A549 (cell line): ENCODE measurements at regions of chr10 and their contacts with region 1.

Region 1: DNA sequence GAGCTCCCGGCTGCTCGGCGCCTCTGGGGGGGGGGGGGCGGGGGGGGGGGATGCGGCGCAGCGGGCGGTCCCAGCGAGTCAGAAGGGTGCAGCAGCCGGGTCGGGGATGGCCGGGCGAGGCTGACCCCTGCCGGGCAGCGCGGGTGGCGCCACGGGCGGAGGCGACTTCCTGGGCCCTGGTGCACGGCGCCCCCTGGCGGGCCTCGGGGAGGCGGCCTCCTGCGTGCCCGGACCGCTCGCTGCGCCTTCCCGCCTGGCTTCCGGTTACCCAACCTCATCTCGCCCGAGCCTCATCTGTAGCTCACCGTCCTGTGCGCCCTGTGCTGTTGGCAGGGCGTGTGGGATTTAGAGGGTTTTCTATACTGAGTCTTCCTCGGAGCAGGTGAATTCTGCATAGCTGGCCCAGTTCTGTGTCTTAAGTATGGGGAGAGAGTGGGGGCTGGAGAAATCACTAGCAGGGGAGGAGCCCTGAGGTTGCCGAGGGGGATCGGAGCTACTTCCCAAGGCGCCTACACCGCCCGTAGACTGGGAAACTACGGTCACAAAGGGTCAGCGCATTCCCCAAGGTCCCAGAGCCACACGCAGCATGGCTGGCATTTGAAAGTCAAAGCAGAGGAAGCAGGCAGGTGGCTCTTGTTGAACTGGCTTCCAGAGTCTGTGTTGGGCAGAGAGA is 28.3 kb upstream of the WDFY4 start:
- DNase-seq: peak; percentile 58 to 92
- ATAC-seq: peak; percentile 79 to 91
- H3K4me3 ChIP-seq: peak overlapping the region; percentile 56
- H3K27ac ChIP-seq: peak overlapping the region; percentile 74 to 88
- H3K4me1 ChIP-seq: 0 out of 3 replicates have a peak, but pooled peaks cover 3% of the 10 kb centered on the region
- CTCF ChIP-seq: peak; percentile 99
- EP300 ChIP-seq: no peak
- POLR2A ChIP-seq: no peak
- RAD21 ChIP-seq: peak; percentile 67 to 95

Region 2: DNA sequence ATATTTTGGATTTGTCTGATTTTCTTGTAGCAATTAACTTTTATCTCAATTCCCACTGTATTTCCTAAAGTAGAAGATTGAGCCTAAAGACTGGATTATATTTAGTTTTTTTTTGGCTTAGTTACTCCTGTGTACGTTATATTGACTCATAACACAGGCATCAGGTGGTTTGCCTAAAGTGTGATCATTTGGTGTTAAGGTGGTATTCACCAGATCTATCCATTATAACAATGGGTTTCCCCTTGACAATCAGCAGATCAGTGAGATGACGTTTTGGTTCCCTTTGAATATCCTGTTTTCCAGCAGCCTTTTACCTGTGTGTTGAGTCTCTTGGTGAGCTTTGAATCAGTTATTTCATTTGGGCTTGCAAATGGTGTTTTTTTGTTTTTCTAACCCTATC is 331.8 kb before region 1 on chr10:
- CTCF ChIA-PET with region 1: no interaction called
- POLR2A ChIA-PET with region 1: no interaction called
- DNase-seq: no peak
- ATAC-seq: no peak
- H3K4me3 ChIP-seq: no peak overlapping the region
- H3K27ac ChIP-seq: no peak overlapping the region
- H3K4me1 ChIP-seq: no peaks in the 10 kb centered on the region
- CTCF ChIP-seq: no peak
- EP300 ChIP-seq: no peak
- POLR2A ChIP-seq: no peak
- RAD21 ChIP-seq: no peak

Region 3: GRCh38 chr10:48363617-48364355 is 292.6 kb before region 1 on chr10:
- CTCF ChIA-PET with region 1: interaction called, 97 read pairs
- POLR2A ChIA-PET with region 1: no interaction called
- DNase-seq: peak; percentile 28 to 80
- ATAC-seq: peak; percentile 90 to 92
- H3K4me3 ChIP-seq: no peak overlapping the region
- H3K27ac ChIP-seq: peak overlapping the region; percentile 19 to 57
- H3K4me1 ChIP-seq: peaks cover 34% of the 10 kb centered on the region
- CTCF ChIP-seq: peak; percentile 95
- EP300 ChIP-seq: no peak
- POLR2A ChIP-seq: no peak
- RAD21 ChIP-seq: peak; percentile 90 to 94

Region 4: GRCh38 chr10:48470115-48470892 is 186.1 kb before region 1 on chr10:
- CTCF ChIA-PET with region 1: interaction called, 10 read pairs
- POLR2A ChIA-PET with region 1: no interaction called
- DNase-seq: no peak
- ATAC-seq: no peak
- H3K4me3 ChIP-seq: no peak overlapping the region
- H3K27ac ChIP-seq: no peak overlapping the region
- H3K4me1 ChIP-seq: no peaks in the 10 kb centered on the region
- CTCF ChIP-seq: no peak
- EP300 ChIP-seq: no peak
- POLR2A ChIP-seq: no peak
- RAD21 ChIP-seq: no peak

Region 5: DNA sequence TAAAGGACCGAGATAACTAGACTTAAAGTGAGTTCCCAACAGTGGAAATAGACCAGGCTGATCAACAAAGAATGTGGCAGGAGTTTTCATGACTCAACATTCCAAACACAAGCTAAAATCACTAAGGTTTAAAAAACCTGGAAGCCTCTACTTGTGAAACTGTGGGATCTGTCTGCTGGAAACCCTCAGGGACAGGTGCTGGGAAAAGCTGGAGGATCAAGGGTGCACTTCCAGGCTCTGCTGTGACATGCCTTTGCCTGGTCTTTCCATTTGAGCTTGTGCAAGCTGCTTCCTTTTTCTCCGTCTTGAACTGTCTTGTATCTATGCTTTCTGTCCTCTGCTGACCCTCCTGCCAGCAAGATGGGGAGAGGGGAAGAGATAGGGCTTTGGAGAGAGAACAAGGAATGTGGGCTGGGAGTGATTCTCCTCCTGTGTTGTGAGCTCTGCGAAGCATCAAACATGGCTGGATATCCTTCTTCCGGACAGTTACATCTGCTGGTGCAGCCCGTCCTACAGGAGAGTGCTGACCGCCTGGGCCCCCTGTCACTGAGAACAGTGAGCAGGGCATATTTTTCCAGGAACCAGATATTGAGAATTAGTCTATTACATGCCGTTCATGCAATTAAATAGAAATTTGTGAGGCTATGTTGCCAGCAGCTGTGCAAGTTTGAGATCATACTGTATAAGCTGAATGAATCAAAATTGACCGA is 77.0 kb before region 1 on chr10:
- CTCF ChIA-PET with region 1: interaction called, 21 read pairs
- POLR2A ChIA-PET with region 1: no interaction called
- DNase-seq: no peak
- ATAC-seq: no peak
- H3K4me3 ChIP-seq: no peak overlapping the region
- H3K27ac ChIP-seq: no peak overlapping the region
- H3K4me1 ChIP-seq: no peaks in the 10 kb centered on the region
- CTCF ChIP-seq: no peak
- EP300 ChIP-seq: no peak
- POLR2A ChIP-seq: no peak
- RAD21 ChIP-seq: no peak

Region 6: DNA sequence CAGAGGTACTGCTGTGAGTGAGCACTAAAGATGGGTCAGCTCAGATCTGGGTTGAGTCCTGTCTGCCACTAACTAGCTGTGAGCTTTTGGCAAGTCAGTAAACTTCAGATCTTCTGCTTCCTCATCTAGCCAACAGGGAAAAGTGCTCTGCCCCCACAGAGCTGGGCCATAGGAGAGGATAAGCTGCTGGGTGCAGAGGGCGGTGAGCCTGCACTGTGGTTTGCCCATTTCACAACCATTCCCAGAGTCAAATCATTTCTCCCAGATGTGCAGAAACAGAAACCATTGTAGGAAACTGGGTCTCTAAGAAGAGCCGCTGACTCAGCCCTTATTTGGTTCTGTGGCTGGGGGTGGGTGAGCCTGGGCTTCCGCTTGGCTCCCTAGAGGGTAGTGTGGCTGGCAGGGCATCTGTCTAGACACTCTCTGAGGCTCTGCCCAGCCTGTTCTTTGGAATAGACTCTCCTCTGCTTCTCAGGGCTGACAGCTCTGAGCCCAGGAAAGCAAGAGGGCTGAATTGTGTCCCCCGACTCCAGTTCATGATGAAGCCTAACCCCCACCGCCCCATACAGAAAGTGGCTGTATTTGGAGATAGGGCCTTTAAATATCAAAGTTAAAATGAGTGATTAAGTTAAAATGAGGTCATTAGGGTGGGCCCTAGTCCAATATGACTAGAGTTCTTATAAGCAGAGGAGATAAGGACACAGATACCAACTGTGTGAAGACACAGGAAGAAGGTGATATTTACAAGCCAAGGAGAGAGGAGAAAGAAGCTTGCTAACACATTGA is 22.0 kb before region 1 on chr10:
- CTCF ChIA-PET with region 1: interaction called, 69 read pairs
- POLR2A ChIA-PET with region 1: no interaction called
- DNase-seq: no peak
- ATAC-seq: no peak
- H3K4me3 ChIP-seq: no peak overlapping the region
- H3K27ac ChIP-seq: no peak overlapping the region
- H3K4me1 ChIP-seq: no peaks in the 10 kb centered on the region
- CTCF ChIP-seq: no peak
- EP300 ChIP-seq: no peak
- POLR2A ChIP-seq: no peak
- RAD21 ChIP-seq: no peak

Region 7: DNA sequence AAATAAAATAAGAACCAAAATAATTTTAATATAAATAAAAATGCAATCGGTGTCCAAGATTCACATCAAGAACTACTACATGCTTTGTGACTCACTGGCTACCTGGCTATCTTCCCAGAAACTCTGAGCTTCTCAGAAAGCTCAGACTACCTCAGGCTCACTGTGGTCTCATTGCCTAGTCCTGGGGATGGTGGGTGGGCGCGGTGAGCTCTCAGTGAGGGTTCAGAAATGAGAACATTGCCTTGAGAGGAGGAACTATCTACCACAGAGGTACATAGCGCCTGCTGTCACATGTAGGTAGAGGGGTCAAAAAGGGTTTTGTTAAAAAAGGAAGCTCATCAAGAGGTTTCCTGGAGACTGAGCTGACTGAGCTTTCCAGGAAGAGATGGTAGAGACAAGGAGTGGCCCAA is 136.3 kb after region 1 on chr10:
- CTCF ChIA-PET with region 1: no interaction called
- POLR2A ChIA-PET with region 1: no interaction called
- DNase-seq: no peak
- ATAC-seq: no peak
- H3K4me3 ChIP-seq: no peak overlapping the region
- H3K27ac ChIP-seq: no peak overlapping the region
- H3K4me1 ChIP-seq: no peaks in the 10 kb centered on the region
- CTCF ChIP-seq: no peak
- EP300 ChIP-seq: no peak
- POLR2A ChIP-seq: no peak
- RAD21 ChIP-seq: no peak

Region 8: GRCh38 chr10:48946891-48947500 is 290.6 kb after region 1 on chr10:
- CTCF ChIA-PET with region 1: no interaction called
- POLR2A ChIA-PET with region 1: no interaction called
- DNase-seq: no peak
- ATAC-seq: no peak
- H3K4me3 ChIP-seq: no peak overlapping the region
- H3K27ac ChIP-seq: no peak overlapping the region
- H3K4me1 ChIP-seq: no peaks in the 10 kb centered on the region
- CTCF ChIP-seq: no peak
- EP300 ChIP-seq: no peak
- POLR2A ChIP-seq: no peak
- RAD21 ChIP-seq: no peak

Region 9: GRCh38 chr10:49021685-49022084 is 365.3 kb after region 1 on chr10:
- CTCF ChIA-PET with region 1: no interaction called
- POLR2A ChIA-PET with region 1: no interaction called
- DNase-seq: no peak
- ATAC-seq: no peak
- H3K4me3 ChIP-seq: no peak overlapping the region
- H3K27ac ChIP-seq: no peak overlapping the region
- H3K4me1 ChIP-seq: no peaks in the 10 kb centered on the region
- CTCF ChIP-seq: no peak
- EP300 ChIP-seq: no peak
- POLR2A ChIP-seq: no peak
- RAD21 ChIP-seq: no peak

Region 10: GRCh38 chr10:49164559-49165188 is 508.3 kb after region 1 on chr10:
- CTCF ChIA-PET with region 1: interaction called, 40 read pairs
- POLR2A ChIA-PET with region 1: no interaction called
- DNase-seq: peak; percentile 13 to 45
- ATAC-seq: peak; percentile 60 to 89; a peak in 4 of 6 replicates
- H3K4me3 ChIP-seq: no peak overlapping the region
- H3K27ac ChIP-seq: no peak overlapping the region
- H3K4me1 ChIP-seq: no peaks in the 10 kb centered on the region
- CTCF ChIP-seq: peak; percentile 29; the same call in 2 of the 3 replicates
- EP300 ChIP-seq: no peak
- POLR2A ChIP-seq: no peak
- RAD21 ChIP-seq: peak in 1 of 2 experiments; percentile 49; a peak in 3 of 5 replicates